Transverse colon (tissue), 4 donors: ENCODE measurements at regions of chr6 and their contacts with region 1.

Region 1: DNA sequence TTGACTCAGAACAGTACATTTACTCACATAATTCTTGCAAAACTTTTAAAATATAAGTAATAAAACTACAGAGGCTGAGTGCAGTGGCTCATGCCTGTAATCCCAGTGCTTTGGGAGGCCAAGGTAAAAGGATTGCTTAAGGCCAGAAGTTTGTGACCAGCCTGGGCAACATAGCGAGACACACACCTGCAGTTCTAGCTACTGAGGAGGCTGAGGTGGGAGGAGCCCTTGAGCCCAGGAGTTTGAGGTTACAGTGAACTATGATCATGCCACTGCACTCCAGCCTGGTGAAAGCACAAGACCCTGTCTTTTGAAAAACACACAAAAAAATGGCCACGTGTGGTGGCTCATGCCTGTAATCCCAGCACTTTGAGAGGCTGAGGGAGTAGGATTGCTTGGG is 21.8 kb upstream of the MYO6 start:
- DNase-seq: no peak
- H3K4me3 ChIP-seq: no peak overlapping the region
- H3K27ac ChIP-seq: no peak overlapping the region
- H3K4me1 ChIP-seq: no peaks in the 10 kb centered on the region
- H3K27me3 ChIP-seq: no peaks in the 10 kb centered on the region
- CTCF ChIP-seq: no peak
- EP300 ChIP-seq: no peak
- POLR2A ChIP-seq: no peak

Region 2: DNA sequence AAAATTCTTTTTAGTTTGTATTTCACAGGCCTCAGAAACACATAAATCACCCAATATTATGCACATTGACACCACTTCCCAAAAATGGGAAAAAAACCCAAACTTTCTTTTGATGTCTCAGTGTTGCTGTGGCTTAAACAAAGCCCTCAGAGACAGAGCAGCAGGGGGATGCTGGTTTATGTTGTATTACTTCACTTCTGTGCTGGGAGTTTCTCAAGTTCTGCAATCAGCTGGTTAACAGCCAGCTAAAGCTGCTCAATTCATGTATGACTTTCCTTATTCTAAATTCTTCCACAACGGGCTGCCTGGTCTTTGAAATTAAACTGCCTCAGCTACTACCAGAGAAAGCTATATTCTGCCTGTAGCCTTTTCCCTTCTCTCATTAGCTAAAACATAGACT is 239.2 kb before region 1 on chr6:
- in situ Hi-C with region 1: no loop called
- intact Hi-C with region 1: no loop called
- DNase-seq: no peak
- H3K4me3 ChIP-seq: no peak overlapping the region
- H3K27ac ChIP-seq: peak overlapping the region; percentile 65 to 85 (median 74)
- H3K4me1 ChIP-seq: peaks cover 0 to 24% (median 4%) of the 10 kb centered on the region in 4 donors
- H3K27me3 ChIP-seq: no peaks in the 10 kb centered on the region
- CTCF ChIP-seq: no peak
- EP300 ChIP-seq: no peak
- POLR2A ChIP-seq: no peak

Region 3: DNA sequence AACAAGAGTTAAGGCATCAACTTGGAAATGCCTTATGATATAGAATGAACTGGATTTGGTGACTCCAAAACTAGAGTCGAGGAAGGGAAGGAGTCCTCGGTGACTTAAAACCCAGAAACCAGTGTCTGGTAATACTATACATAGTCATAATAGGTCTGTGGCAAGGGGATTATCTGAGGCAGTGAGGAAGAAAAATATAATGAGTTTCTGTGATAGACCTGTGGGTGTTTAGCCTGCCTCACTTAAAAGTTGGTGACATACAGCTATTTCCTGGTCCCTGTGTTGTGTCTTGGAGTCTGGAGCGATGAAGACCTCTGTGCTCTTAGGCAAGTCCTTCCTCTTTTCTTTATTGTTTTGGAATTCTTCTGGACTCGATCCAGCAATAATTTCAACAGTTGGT is 16.8 kb after region 1 on chr6:
- in situ Hi-C with region 1: no loop called
- intact Hi-C with region 1: loop called (anchors 1 kb)
- DNase-seq: no peak
- H3K4me3 ChIP-seq: no peak overlapping the region
- H3K27ac ChIP-seq: no peak overlapping the region
- H3K4me1 ChIP-seq: peaks cover 0 to 12% (median 11%) of the 10 kb centered on the region in 4 donors
- H3K27me3 ChIP-seq: no peaks in the 10 kb centered on the region
- CTCF ChIP-seq: no peak
- EP300 ChIP-seq: no peak
- POLR2A ChIP-seq: no peak